WTC11 (cell line): ENCODE measurements at regions of chr11 and their contacts with region 1.

Region 1: DNA sequence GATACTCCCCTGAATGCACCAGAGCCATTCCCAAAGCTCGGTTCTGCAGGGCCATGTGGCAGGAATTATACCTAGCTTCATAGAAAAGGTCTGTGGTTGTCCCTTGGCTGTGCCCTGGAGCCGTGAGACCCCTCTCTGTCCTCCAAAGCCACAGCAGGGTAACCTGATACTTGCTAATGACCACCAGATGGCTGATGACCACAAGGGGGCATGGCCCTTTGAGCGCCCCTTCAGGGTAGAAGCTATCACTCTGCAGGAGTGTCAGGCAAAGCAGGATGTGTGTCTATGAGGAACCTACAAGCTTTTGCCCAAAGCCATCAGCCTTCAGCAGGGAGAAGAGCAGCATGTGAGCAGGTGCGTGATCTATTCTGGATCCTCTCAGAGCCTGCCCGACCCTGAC is 95.3 kb downstream of the NTM start:
- DNase-seq: peak; percentile 78
- ATAC-seq: peak; percentile 97
- H3K4me3 Mint-ChIP-seq: no peak overlapping the region
- H3K27ac Mint-ChIP-seq: peak overlapping the region; percentile 87
- H3K4me1 Mint-ChIP-seq: peaks cover 42% of the 10 kb centered on the region
- H3K27me3 Mint-ChIP-seq: no peaks in the 10 kb centered on the region
- CTCF ChIP-seq: 0 out of 2 replicates have a peak, but pooled peaks have one; percentile 25

Region 2: GRCh38 chr11:131246663-131247062 is 219.1 kb before region 1 on chr11:
- CTCF ChIA-PET with region 1: interaction called, 16 read pairs
- POLR2A ChIA-PET with region 1: no interaction called
- DNase-seq: peak; percentile 82
- ATAC-seq: peak; percentile 91
- H3K4me3 Mint-ChIP-seq: peak overlapping the region; percentile 53
- H3K27ac Mint-ChIP-seq: no peak overlapping the region
- H3K4me1 Mint-ChIP-seq: peaks cover 48% of the 10 kb centered on the region
- H3K27me3 Mint-ChIP-seq: peaks cover 12% of the 10 kb centered on the region
- CTCF ChIP-seq: peak; percentile 73

Region 3: GRCh38 chr11:131408025-131408640 is 57.6 kb before region 1 on chr11:
- CTCF ChIA-PET with region 1: interaction called, 15 read pairs
- POLR2A ChIA-PET with region 1: no interaction called
- DNase-seq: peak; percentile 55
- ATAC-seq: peak; percentile 83
- H3K4me3 Mint-ChIP-seq: no peak overlapping the region
- H3K27ac Mint-ChIP-seq: no peak overlapping the region
- H3K4me1 Mint-ChIP-seq: peaks cover 14% of the 10 kb centered on the region
- H3K27me3 Mint-ChIP-seq: no peaks in the 10 kb centered on the region
- CTCF ChIP-seq: peak; percentile 24; the same call in 1 of the 2 replicates

Region 4: DNA sequence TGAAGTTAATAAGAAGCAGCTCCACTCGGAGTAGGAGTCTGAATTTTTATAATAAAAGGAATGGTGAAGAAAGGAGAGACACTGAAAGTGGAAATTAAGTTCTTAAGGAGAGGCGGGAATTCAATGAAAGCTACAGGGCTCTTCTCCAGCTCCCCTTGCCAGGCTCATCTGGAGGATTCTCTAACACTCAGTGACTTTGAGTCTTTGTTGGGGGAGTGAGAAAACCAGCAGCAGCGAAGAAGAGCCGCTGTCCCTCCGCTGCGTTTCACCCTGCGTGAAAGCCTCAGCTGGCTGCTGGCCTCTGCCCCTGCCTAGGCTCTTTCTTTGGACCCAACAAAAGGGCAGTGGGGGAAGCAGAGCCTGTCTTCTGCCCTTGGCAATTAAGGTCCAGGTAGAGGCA is 17.7 kb after region 1 on chr11:
- CTCF ChIA-PET with region 1: interaction called, 11 read pairs
- POLR2A ChIA-PET with region 1: no interaction called
- DNase-seq: no peak
- ATAC-seq: no peak
- H3K4me3 Mint-ChIP-seq: no peak overlapping the region
- H3K27ac Mint-ChIP-seq: no peak overlapping the region
- H3K4me1 Mint-ChIP-seq: peaks cover 12% of the 10 kb centered on the region
- H3K27me3 Mint-ChIP-seq: peaks cover 6% of the 10 kb centered on the region
- CTCF ChIP-seq: no peak

Region 5: GRCh38 chr11:131495423-131495822 is 29.7 kb after region 1 on chr11:
- CTCF ChIA-PET with region 1: interaction called, 12 read pairs
- POLR2A ChIA-PET with region 1: no interaction called
- DNase-seq: no peak
- ATAC-seq: no peak
- H3K4me3 Mint-ChIP-seq: no peak overlapping the region
- H3K27ac Mint-ChIP-seq: 0 out of 2 replicates have a peak overlapping the region, but pooled peaks have one; percentile 17
- H3K4me1 Mint-ChIP-seq: peaks cover 7% of the 10 kb centered on the region
- H3K27me3 Mint-ChIP-seq: no peaks in the 10 kb centered on the region
- CTCF ChIP-seq: no peak

Region 6: GRCh38 chr11:131504199-131504949 is 38.6 kb after region 1 on chr11:
- CTCF ChIA-PET with region 1: interaction called, 26 read pairs
- POLR2A ChIA-PET with region 1: no interaction called
- DNase-seq: peak; percentile 78
- ATAC-seq: peak; percentile 99
- H3K4me3 Mint-ChIP-seq: no peak overlapping the region
- H3K27ac Mint-ChIP-seq: 0 out of 2 replicates have a peak overlapping the region, but pooled peaks have one; percentile 26
- H3K4me1 Mint-ChIP-seq: peaks cover 18% of the 10 kb centered on the region
- H3K27me3 Mint-ChIP-seq: no peaks in the 10 kb centered on the region
- CTCF ChIP-seq: peak; percentile 36

Region 7: GRCh38 chr11:131644204-131644795 is 178.6 kb after region 1 on chr11:
- CTCF ChIA-PET with region 1: no interaction called
- POLR2A ChIA-PET with region 1: no interaction called
- DNase-seq: no peak
- ATAC-seq: no peak
- H3K4me3 Mint-ChIP-seq: no peak overlapping the region
- H3K27ac Mint-ChIP-seq: no peak overlapping the region
- H3K4me1 Mint-ChIP-seq: peaks cover 70% of the 10 kb centered on the region
- H3K27me3 Mint-ChIP-seq: no peaks in the 10 kb centered on the region; the same call in 1 of the 2 replicates
- CTCF ChIP-seq: no peak

Region 8: DNA sequence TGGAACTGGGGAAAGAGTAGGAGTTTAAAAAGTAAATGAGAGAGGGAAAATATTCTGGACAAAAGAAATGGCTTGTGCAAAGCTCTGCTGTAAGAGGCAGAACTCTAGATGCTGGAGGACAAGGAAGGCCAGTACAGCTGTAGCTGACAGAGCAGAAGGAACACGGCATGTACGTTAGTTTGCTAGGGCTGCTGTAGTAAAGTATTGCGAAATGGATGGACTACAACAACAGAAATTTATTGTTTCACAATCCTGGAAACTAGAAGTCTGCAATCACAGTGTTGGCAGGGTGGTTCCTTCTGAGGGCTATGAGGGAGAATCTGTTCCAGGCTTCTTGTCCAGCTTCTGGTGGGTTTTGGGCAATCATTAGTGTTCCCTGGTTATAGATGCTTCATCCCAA is 359.0 kb after region 1 on chr11:
- CTCF ChIA-PET with region 1: no interaction called
- POLR2A ChIA-PET with region 1: no interaction called
- DNase-seq: no peak
- ATAC-seq: no peak
- H3K4me3 Mint-ChIP-seq: no peak overlapping the region
- H3K27ac Mint-ChIP-seq: no peak overlapping the region
- H3K4me1 Mint-ChIP-seq: peaks cover 29% of the 10 kb centered on the region
- H3K27me3 Mint-ChIP-seq: no peaks in the 10 kb centered on the region
- CTCF ChIP-seq: no peak